Dendritic cell treated with granulocyte-macrophage colony-stimulating factor and Interleukin-4, amounts not matched to agents 40 ng/mL and 50 ng/mL, for 4 days (primary cell): ENCODE measurements at regions of chr4 and their contacts with region 1.

Region 1: GRCh38 chr4:38534344-38535045 is 129.5 kb upstream of the KLF3 start:
- H3K4me3 Mint-ChIP-seq: no peak overlapping the region
- H3K27ac Mint-ChIP-seq: peak overlapping the region; percentile 77
- H3K4me1 Mint-ChIP-seq: peaks cover 50% of the 10 kb centered on the region
- H3K27me3 Mint-ChIP-seq: no peaks in the 10 kb centered on the region

Region 2: GRCh38 chr4:38343608-38344007 is 190.9 kb before region 1 on chr4:
- intact Hi-C with region 1: no loop called
- H3K4me3 Mint-ChIP-seq: no peak overlapping the region
- H3K27ac Mint-ChIP-seq: no peak overlapping the region
- H3K4me1 Mint-ChIP-seq: peaks cover 6% of the 10 kb centered on the region
- H3K27me3 Mint-ChIP-seq: no peaks in the 10 kb centered on the region

Region 3: GRCh38 chr4:38514465-38515146 is 19.9 kb before region 1 on chr4:
- intact Hi-C with region 1: no loop called
- H3K4me3 Mint-ChIP-seq: no peak overlapping the region
- H3K27ac Mint-ChIP-seq: no peak overlapping the region
- H3K4me1 Mint-ChIP-seq: peaks cover 10% of the 10 kb centered on the region
- H3K27me3 Mint-ChIP-seq: no peaks in the 10 kb centered on the region

Region 4: DNA sequence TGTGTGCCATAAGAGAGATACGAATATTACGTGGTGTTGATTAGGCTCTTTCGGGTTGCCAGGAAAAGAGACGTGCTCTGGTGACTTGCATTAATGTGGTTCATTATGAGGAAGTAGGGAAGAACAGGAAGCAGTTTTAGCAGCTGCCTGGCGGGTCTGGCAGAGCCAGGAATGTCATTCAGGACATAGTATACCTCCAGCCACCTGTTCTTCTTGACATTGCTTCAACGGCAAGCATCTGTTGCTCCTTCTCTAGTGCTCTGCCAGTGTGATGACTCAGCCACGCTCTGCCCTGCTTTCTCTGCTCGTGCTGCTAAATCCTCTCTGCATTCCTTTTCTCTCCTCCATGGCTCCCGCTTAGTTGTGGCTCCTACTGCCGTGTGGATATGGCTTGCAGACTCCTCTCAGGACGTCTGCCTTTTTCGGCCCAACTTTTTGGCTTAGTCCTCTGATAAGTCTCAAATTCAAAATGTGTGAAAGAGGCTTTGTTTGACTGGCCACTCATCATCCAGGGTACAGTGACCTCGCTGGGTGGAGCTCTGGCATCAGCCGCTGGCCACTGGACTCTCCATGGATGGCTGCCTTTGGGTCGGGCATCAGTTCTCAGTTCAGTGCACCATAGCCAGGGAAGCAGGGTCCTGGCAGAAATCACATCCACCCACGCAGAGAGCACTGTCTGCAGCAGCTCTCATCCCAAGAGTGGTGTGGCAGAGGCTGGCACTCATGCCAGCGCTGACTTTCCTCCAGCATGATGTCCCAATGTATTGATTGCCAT is 40.3 kb after region 1 on chr4:
- intact Hi-C with region 1: loop called (anchors 5 kb)
- H3K4me3 Mint-ChIP-seq: no peak overlapping the region
- H3K27ac Mint-ChIP-seq: peak overlapping the region; percentile 71
- H3K4me1 Mint-ChIP-seq: peaks cover 30% of the 10 kb centered on the region
- H3K27me3 Mint-ChIP-seq: no peaks in the 10 kb centered on the region

Region 5: GRCh38 chr4:39205000-39205399 is 670.5 kb after region 1 on chr4:
- intact Hi-C with region 1: no loop called
- H3K4me3 Mint-ChIP-seq: no peak overlapping the region
- H3K27ac Mint-ChIP-seq: no peak overlapping the region
- H3K4me1 Mint-ChIP-seq: no peaks in the 10 kb centered on the region
- H3K27me3 Mint-ChIP-seq: no peaks in the 10 kb centered on the region